CD4-positive, alpha-beta T cell (primary cell): ENCODE measurements at regions of chr5 and their contacts with region 1.

Region 1: DNA sequence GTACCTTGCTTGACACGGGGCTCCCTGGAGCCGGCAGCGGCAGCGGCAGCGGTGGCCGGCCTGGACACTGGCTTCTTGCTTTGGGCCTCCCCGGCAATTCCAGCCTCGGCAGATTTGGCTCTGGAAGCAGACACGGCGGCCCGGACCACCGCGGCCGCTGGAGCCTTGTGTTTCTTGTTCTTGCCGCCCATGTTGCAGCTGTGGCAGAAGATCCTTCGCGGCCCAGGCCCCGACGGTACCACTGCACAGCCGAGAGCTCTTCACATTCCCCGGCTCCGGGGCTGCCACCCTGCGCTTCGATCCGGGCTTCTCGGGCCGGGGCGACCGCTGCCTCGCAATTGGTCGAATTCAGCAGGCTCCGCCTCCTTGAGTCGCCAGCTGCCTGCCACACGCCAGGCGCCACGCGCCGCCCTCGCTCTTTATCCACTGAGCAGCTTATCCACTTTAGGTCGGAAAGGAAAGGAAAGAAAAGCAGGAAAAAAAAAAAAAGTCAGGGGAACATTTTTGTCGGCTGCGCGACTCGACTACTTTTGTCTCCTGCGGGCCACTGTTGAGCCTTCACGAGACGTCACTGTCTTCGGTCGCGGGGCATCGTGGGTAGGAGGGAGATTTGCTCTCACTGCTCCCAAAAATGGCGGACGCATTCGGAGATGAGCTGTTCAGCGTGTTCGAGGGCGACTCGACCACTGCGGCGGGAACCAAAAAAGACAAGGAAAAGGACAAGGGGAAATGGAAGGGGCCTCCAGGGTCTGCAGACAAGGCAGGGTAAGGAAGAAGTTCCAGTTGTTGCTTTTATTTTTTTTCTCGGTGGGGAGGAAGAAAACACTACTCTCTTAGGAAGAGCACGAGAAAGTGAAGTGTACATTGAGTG is at the starts of genes DHX29 and MTREX:
- DNase-seq: peak; percentile 79 to 93 (median 83)
- ATAC-seq: peak; percentile 90
- H3K4me3 ChIP-seq: peak within 1 kb of the TSS; percentile 94
- H3K4me3 Mint-ChIP-seq: no peak within 1 kb of the TSS
- H3K27ac ChIP-seq: peak within 1 kb of the TSS; percentile 88 to 90
- H3K27ac Mint-ChIP-seq: no peak within 1 kb of the TSS
- H3K4me1 ChIP-seq: peaks cover 29% of the 10 kb centered on the region
- H3K4me1 Mint-ChIP-seq: peaks cover 35% of the 10 kb centered on the region
- H3K27me3 ChIP-seq: no peaks in the 10 kb centered on the region
- H3K27me3 Mint-ChIP-seq: no peaks in the 10 kb centered on the region
- CTCF ChIP-seq: no peak
- total RNA-seq, gene DHX29: 13.8 to 17.9 TPM
- total RNA-seq, gene MTREX: 50.9 to 54.5 TPM

Region 2: DNA sequence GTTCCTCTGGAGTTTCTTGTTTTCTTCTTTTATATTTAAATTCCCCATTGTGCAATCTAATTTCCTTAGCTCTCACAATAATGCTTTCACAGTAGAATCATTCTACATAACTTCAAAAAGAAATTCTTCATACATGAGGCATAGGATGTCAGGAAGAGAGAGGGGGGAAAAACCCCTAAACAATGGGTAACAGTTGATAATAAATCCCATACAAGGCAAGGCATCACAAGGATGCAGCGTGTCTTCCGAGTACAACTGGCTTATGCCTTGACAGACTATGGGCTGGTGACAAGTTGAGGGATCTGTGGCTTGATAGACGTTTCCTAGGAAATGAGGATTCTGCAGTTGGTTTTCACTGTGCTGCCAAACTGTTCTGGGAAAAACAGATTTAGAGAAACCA is 1244.7 kb before region 1 on chr5:
- CTCF ChIA-PET with region 1: no interaction called
- POLR2A ChIA-PET with region 1: no interaction called
- intact Hi-C with region 1: no loop called
- DNase-seq: no peak
- ATAC-seq: no peak
- H3K4me3 ChIP-seq: no peak overlapping the region
- H3K4me3 Mint-ChIP-seq: no peak overlapping the region
- H3K27ac ChIP-seq: no peak overlapping the region
- H3K27ac Mint-ChIP-seq: no peak overlapping the region
- H3K4me1 ChIP-seq: no peaks in the 10 kb centered on the region
- H3K4me1 Mint-ChIP-seq: no peaks in the 10 kb centered on the region
- H3K27me3 ChIP-seq: no peaks in the 10 kb centered on the region
- H3K27me3 Mint-ChIP-seq: no peaks in the 10 kb centered on the region
- CTCF ChIP-seq: no peak

Region 3: GRCh38 chr5:55102348-55102747 is 205.3 kb before region 1 on chr5 and contains the start of gene GZMA:
- CTCF ChIA-PET with region 1: no interaction called
- POLR2A ChIA-PET with region 1: no interaction called
- intact Hi-C with region 1: loop called in 1 of 2 experiments (anchors 10 kb)
- DNase-seq: peak in 9 of 14 experiments; percentile 5 to 86 (median 47)
- ATAC-seq: peak; percentile 80
- H3K4me3 ChIP-seq: peak within 1 kb of the TSS; percentile 59
- H3K4me3 Mint-ChIP-seq: peak within 1 kb of the TSS; percentile 85
- H3K27ac ChIP-seq: peak within 1 kb of the TSS in 1 of 2 donors; percentile 61
- H3K27ac Mint-ChIP-seq: peak within 1 kb of the TSS; percentile 68
- H3K4me1 ChIP-seq: peaks cover 49% of the 10 kb centered on the region
- H3K4me1 Mint-ChIP-seq: peaks cover 80% of the 10 kb centered on the region
- H3K27me3 ChIP-seq: no peaks in the 10 kb centered on the region
- H3K27me3 Mint-ChIP-seq: no peaks in the 10 kb centered on the region
- CTCF ChIP-seq: no peak
- total RNA-seq, gene GZMA: 3.5 to 5.0 TPM

Region 4: GRCh38 chr5:55290991-55291390 is 16.6 kb before region 1 on chr5:
- CTCF ChIA-PET with region 1: no interaction called
- POLR2A ChIA-PET with region 1: interaction called, 19 read pairs
- intact Hi-C with region 1: no loop called
- DNase-seq: no peak
- ATAC-seq: no peak
- H3K4me3 ChIP-seq: no peak overlapping the region
- H3K4me3 Mint-ChIP-seq: no peak overlapping the region
- H3K27ac ChIP-seq: no peak overlapping the region
- H3K27ac Mint-ChIP-seq: no peak overlapping the region
- H3K4me1 ChIP-seq: no peaks in the 10 kb centered on the region
- H3K4me1 Mint-ChIP-seq: no peaks in the 10 kb centered on the region
- H3K27me3 ChIP-seq: no peaks in the 10 kb centered on the region
- H3K27me3 Mint-ChIP-seq: no peaks in the 10 kb centered on the region
- CTCF ChIP-seq: no peak

Region 5: DNA sequence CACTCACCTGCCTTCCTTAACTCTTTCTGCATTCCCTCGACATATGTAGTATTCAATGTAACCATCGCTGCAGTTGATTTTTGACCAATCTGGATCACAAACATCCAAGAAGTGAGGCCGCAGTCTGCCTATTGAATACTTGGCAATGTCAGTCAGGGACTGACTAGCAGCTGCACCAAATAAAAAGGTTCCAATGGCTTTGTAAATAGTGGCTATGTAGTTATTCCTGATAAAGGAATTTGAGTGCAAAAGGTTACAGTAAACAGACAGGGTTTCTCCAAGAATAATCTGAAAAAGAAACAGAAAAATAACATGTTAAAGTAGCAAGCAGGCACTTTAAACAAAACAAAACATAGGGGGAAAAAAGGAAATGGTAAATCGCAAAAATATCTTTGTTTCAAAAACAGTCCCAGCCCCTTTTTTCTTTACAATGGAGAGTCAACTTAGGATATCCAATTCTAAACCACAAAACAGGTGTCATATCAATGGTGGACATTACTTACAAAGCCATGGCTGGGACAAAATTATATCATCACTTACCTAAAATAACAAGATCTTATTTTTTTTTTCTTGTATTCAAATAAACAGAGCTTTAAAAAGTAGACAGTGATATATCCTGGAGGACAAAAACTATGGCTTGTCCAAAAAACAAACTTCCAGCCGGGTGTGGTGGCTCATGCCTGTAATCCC is 160.4 kb after region 1 on chr5:
- CTCF ChIA-PET with region 1: no interaction called
- POLR2A ChIA-PET with region 1: no interaction called
- intact Hi-C with region 1: no loop called
- DNase-seq: no peak
- ATAC-seq: no peak
- H3K4me3 ChIP-seq: no peak overlapping the region
- H3K4me3 Mint-ChIP-seq: no peak overlapping the region
- H3K27ac ChIP-seq: no peak overlapping the region
- H3K27ac Mint-ChIP-seq: no peak overlapping the region
- H3K4me1 ChIP-seq: no peaks in the 10 kb centered on the region
- H3K4me1 Mint-ChIP-seq: no peaks in the 10 kb centered on the region
- H3K27me3 ChIP-seq: no peaks in the 10 kb centered on the region
- H3K27me3 Mint-ChIP-seq: no peaks in the 10 kb centered on the region
- CTCF ChIP-seq: no peak

Region 6: DNA sequence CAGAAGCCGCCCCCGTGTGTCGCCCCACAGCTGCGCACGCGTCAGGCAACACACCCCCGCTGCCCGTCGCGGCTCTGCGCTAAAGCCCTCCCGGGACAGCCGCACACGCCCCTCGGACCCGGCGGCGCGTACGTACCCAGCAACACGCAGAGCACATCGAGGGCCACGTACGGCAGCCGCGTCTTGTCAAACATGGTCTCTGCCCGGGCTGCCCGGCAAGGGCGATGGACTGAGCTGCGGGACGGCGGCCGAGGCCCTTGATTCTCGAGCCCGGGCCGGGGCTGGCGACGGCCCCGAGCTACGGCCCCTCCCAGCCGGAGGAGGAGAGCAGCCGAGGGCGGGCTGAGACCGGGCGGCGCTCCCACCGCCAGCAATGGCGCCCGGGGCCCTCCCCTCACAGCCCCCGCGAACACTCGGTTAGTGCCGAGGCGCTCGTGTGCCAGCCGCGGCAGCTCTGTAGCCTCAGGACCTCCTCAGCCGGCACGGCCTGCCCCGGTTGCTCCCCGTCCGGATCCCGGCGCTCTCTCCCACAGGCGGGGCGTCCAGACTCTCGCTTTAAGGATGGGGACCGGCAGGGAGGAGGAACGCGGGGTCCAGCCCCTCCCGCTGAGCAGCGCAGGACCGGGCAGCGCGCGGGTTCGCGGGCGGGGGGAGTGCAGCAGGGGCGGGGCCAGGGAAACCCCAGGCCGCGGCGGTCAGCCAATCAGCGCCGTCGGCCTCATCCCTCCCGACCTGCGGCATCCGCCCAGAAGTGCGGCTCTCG is 227.0 kb after region 1 on chr5 and contains the start of gene PLPP1:
- CTCF ChIA-PET with region 1: no interaction called
- POLR2A ChIA-PET with region 1: interaction called, 3 read pairs
- intact Hi-C with region 1: loop called in 1 of 2 experiments (anchors 5 kb)
- DNase-seq: peak; percentile 65 to 93 (median 78)
- ATAC-seq: peak; percentile 82
- H3K4me3 ChIP-seq: peak within 1 kb of the TSS; percentile 74
- H3K4me3 Mint-ChIP-seq: peak within 1 kb of the TSS; percentile 85
- H3K27ac ChIP-seq: peak within 1 kb of the TSS; percentile 60 to 85
- H3K27ac Mint-ChIP-seq: peak within 1 kb of the TSS; percentile 83
- H3K4me1 ChIP-seq: peaks cover 25% of the 10 kb centered on the region
- H3K4me1 Mint-ChIP-seq: peaks cover 48% of the 10 kb centered on the region
- H3K27me3 ChIP-seq: no peaks in the 10 kb centered on the region
- H3K27me3 Mint-ChIP-seq: no peaks in the 10 kb centered on the region
- CTCF ChIP-seq: no peak
- total RNA-seq, gene PLPP1: 2.9 to 3.0 TPM

Region 7: GRCh38 chr5:57173185-57174127 is 1865.8 kb after region 1 on chr5 and contains the start of gene GPBP1:
- CTCF ChIA-PET with region 1: no interaction called
- POLR2A ChIA-PET with region 1: interaction called, 9 read pairs
- intact Hi-C with region 1: loop called in 1 of 2 experiments (anchors 5 kb)
- DNase-seq: peak; percentile 94 to 100 (median 97)
- ATAC-seq: peak; percentile 70
- H3K4me3 ChIP-seq: peak within 1 kb of the TSS; percentile 91
- H3K4me3 Mint-ChIP-seq: peak within 1 kb of the TSS; percentile 98
- H3K27ac ChIP-seq: peak within 1 kb of the TSS; percentile 100
- H3K27ac Mint-ChIP-seq: peak within 1 kb of the TSS; percentile 96
- H3K4me1 ChIP-seq: peaks cover 19% of the 10 kb centered on the region
- H3K4me1 Mint-ChIP-seq: peaks cover 41% of the 10 kb centered on the region
- H3K27me3 ChIP-seq: no peaks in the 10 kb centered on the region
- H3K27me3 Mint-ChIP-seq: no peaks in the 10 kb centered on the region
- CTCF ChIP-seq: no peak
- total RNA-seq, gene GPBP1: 136 to 137 TPM